CD4-positive, alpha-beta T cell (primary cell): ENCODE measurements at regions of chr12 and their contacts with region 1.

Region 1: GRCh38 chr12:53321074-53321814 is at the start of gene AAAS:
- DNase-seq: peak; percentile 86 to 97 (median 94)
- ATAC-seq: peak; percentile 79
- H3K4me3 ChIP-seq: peak within 1 kb of the TSS; percentile 69
- H3K4me3 Mint-ChIP-seq: peak within 1 kb of the TSS; percentile 94
- H3K27ac ChIP-seq: peak within 1 kb of the TSS; percentile 61 to 77
- H3K27ac Mint-ChIP-seq: peak within 1 kb of the TSS; percentile 87
- H3K4me1 ChIP-seq: peaks cover 52% of the 10 kb centered on the region
- H3K4me1 Mint-ChIP-seq: peaks cover 44% of the 10 kb centered on the region
- H3K27me3 ChIP-seq: no peaks in the 10 kb centered on the region
- H3K27me3 Mint-ChIP-seq: no peaks in the 10 kb centered on the region
- CTCF ChIP-seq: peak; percentile 100
- total RNA-seq, gene AAAS: 21.0 to 22.7 TPM

Region 2: DNA sequence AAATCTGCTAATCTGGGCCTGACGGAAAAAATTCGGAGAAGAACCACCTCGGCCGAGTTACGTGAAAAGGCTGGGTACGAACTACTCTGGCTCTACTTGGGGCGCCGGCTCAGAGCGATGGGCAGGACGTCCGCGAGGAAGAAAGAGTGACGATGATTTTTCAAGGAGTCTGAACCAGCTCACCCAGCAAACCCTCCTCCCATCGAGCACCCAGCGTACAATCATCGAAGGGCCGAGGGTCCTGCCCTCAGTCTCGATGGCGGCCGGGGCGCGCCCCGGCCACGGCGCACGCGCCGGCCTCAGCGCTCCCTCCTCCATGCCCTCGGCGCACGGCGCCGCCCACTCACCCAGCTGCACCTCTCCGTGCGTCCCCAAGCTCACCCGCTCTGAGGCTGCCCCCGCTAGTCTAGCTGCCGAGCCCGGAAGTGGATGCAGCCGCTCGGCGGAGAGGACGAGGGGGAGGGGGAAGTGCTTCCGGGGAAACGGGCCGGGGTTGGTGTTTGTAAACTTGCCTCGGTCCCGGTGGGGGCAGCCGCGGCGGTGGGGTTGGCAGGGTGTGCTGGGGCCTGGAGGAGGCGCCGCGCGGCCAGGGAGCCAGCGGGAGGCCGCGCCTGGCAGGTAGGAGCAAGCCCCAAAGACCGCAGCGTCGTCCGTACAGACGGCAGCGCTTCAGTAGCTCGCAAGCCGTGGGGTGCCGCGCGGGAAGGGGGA is 140.9 kb before region 1 on chr12 and contains the starts of genes CSAD and ZNF740:
- CTCF ChIA-PET with region 1: interaction called, 7 read pairs
- POLR2A ChIA-PET with region 1: interaction called, 18 read pairs
- intact Hi-C with region 1: no loop called
- DNase-seq: peak; percentile 92 to 99 (median 97)
- ATAC-seq: peak; percentile 93
- H3K4me3 ChIP-seq: peak within 1 kb of the TSS; percentile 94
- H3K4me3 Mint-ChIP-seq: peak within 1 kb of the TSS; percentile 98
- H3K27ac ChIP-seq: peak within 1 kb of the TSS; percentile 87 to 92
- H3K27ac Mint-ChIP-seq: peak within 1 kb of the TSS; percentile 94
- H3K4me1 ChIP-seq: peaks cover 52% of the 10 kb centered on the region
- H3K4me1 Mint-ChIP-seq: peaks cover 57% of the 10 kb centered on the region
- H3K27me3 ChIP-seq: no peaks in the 10 kb centered on the region
- H3K27me3 Mint-ChIP-seq: no peaks in the 10 kb centered on the region
- CTCF ChIP-seq: no peak
- total RNA-seq, gene CSAD: 56.7 to 57.3 TPM
- total RNA-seq, gene ZNF740: 24.4 to 24.7 TPM

Region 3: DNA sequence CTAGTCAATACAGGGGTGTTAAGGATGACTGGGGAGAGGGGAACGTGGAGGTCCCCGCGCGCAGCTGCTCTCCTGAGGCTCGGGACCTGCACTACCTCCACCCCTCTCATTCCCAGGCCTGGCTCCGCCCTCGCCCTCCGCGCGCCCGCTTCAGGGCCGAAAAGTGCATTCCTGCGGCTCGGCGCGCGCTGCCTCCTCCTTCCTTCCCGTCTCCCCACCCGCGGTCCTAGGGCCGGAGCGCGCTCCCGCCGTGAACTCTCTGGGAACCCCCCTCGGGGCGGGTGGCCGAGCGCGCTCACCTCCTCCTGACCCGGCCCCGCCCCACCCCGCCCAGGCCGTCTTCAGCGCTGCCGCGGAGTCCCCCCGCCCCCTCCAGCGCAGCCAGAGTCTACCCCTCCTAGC is 100.4 kb before region 1 on chr12:
- CTCF ChIA-PET with region 1: interaction called, 5 read pairs
- POLR2A ChIA-PET with region 1: interaction called, 21 read pairs
- intact Hi-C with region 1: no loop called
- DNase-seq: peak; percentile 51 to 94 (median 70)
- ATAC-seq: peak; percentile 47
- H3K4me3 ChIP-seq: peak overlapping the region; percentile 77
- H3K4me3 Mint-ChIP-seq: peak overlapping the region; percentile 100
- H3K27ac ChIP-seq: peak overlapping the region; percentile 92 to 96
- H3K27ac Mint-ChIP-seq: peak overlapping the region; percentile 90
- H3K4me1 ChIP-seq: peaks cover 84% of the 10 kb centered on the region
- H3K4me1 Mint-ChIP-seq: peaks cover 86% of the 10 kb centered on the region
- H3K27me3 ChIP-seq: no peaks in the 10 kb centered on the region
- H3K27me3 Mint-ChIP-seq: no peaks in the 10 kb centered on the region
- CTCF ChIP-seq: no peak

Region 4: GRCh38 chr12:53344824-53345485 is 23.7 kb after region 1 on chr12:
- CTCF ChIA-PET with region 1: interaction called, 51 read pairs
- POLR2A ChIA-PET with region 1: interaction called, 87 read pairs
- intact Hi-C with region 1: loop called (anchors 1 kb)
- DNase-seq: peak; percentile 51 to 85 (median 65)
- ATAC-seq: peak; percentile 80
- H3K4me3 ChIP-seq: peak overlapping the region; percentile 66
- H3K4me3 Mint-ChIP-seq: peak overlapping the region; percentile 93
- H3K27ac ChIP-seq: no peak overlapping the region
- H3K27ac Mint-ChIP-seq: peak overlapping the region; percentile 72
- H3K4me1 ChIP-seq: peaks cover 15% of the 10 kb centered on the region
- H3K4me1 Mint-ChIP-seq: peaks cover 21% of the 10 kb centered on the region
- H3K27me3 ChIP-seq: peaks cover 2 to 3% of the 10 kb centered on the region in 2 experiments
- H3K27me3 Mint-ChIP-seq: peaks cover 3% of the 10 kb centered on the region
- CTCF ChIP-seq: peak; percentile 81

Region 5: DNA sequence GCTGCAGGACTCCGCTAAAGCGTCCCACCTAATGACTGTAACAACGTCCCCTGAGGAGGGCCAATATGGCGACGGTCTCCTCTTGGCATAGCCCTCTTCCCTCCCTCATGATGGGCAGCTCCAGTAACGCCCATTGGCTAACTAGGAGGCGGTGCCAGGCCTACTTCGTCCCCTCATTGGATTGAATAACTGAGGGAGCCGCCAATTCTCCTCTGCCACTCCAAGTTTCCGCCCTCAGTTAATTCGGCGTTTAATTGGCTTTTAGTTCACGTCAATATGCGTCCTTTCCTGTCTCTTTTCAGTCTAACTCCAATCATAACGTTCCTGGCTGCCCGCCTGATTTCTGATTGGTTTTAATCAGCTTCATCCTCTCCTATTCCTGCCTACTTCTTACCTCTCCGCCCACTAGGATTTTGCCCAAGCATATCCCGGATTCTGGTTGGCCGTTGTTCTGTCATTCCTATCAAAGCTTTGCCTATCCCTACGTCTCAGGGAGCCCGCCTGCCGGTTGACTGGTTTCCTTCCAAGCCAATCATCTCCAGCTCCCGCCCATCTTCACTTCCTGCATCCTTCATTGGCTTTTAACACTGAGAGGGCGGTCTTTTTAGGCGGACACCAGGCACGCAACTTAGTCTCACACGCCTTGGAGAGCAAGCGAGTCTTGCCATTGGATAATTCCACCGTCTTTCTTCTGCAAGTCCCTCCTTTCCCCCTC is 58.3 kb after region 1 on chr12:
- CTCF ChIA-PET with region 1: interaction called, 10 read pairs
- POLR2A ChIA-PET with region 1: interaction called, 32 read pairs
- intact Hi-C with region 1: loop called (anchors 1 kb)
- DNase-seq: peak in 12 of 14 experiments; percentile 80 to 100 (median 92)
- ATAC-seq: peak; percentile 76
- H3K4me3 ChIP-seq: peak overlapping the region; percentile 63
- H3K4me3 Mint-ChIP-seq: no peak overlapping the region
- H3K27ac ChIP-seq: peak overlapping the region; percentile 67 to 75
- H3K27ac Mint-ChIP-seq: no peak overlapping the region
- H3K4me1 ChIP-seq: peaks cover 52% of the 10 kb centered on the region
- H3K4me1 Mint-ChIP-seq: peaks cover 31% of the 10 kb centered on the region
- H3K27me3 ChIP-seq: no peaks in the 10 kb centered on the region
- H3K27me3 Mint-ChIP-seq: no peaks in the 10 kb centered on the region
- CTCF ChIP-seq: no peak

Region 6: DNA sequence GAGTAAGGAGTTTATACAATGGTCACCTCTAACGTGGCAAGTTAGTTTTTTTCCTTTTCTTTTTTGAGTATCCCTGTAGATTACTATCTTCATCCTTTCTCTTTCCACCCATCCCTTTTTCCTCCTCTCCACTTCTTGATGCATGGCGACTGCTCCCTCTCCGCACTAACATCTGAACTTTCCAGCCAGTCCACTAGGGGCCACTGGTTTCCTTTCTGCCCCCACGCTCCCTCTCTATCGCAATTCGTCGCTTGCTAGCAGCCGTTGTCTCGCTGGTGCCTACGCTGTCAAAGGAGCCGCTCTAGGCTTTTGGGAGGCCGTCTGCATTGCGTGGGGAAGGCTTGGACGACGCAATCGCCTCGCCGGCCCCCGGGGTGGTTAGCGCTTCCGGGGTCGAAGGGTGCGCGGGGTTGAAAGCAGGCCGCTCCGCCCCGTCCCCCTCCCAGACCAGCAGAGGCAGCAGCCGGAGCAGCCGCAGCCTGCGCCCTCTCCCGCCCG is 130.5 kb after region 1 on chr12 and contains the start of gene PCBP2:
- CTCF ChIA-PET with region 1: interaction called, 3 read pairs
- POLR2A ChIA-PET with region 1: interaction called, 4 read pairs
- intact Hi-C with region 1: loop called in 1 of 2 experiments (anchors 1 kb)
- DNase-seq: peak; percentile 93 to 99 (median 97)
- ATAC-seq: peak; percentile 93
- H3K4me3 ChIP-seq: peak within 1 kb of the TSS; percentile 86
- H3K4me3 Mint-ChIP-seq: peak within 1 kb of the TSS; percentile 98
- H3K27ac ChIP-seq: peak within 1 kb of the TSS; percentile 93
- H3K27ac Mint-ChIP-seq: peak within 1 kb of the TSS; percentile 89
- H3K4me1 ChIP-seq: peaks cover 16% of the 10 kb centered on the region
- H3K4me1 Mint-ChIP-seq: peaks cover 46% of the 10 kb centered on the region
- H3K27me3 ChIP-seq: no peaks in the 10 kb centered on the region
- H3K27me3 Mint-ChIP-seq: no peaks in the 10 kb centered on the region
- CTCF ChIP-seq: peak; percentile 87
- total RNA-seq, gene PCBP2: 1,331 to 1,359 TPM

Region 7: DNA sequence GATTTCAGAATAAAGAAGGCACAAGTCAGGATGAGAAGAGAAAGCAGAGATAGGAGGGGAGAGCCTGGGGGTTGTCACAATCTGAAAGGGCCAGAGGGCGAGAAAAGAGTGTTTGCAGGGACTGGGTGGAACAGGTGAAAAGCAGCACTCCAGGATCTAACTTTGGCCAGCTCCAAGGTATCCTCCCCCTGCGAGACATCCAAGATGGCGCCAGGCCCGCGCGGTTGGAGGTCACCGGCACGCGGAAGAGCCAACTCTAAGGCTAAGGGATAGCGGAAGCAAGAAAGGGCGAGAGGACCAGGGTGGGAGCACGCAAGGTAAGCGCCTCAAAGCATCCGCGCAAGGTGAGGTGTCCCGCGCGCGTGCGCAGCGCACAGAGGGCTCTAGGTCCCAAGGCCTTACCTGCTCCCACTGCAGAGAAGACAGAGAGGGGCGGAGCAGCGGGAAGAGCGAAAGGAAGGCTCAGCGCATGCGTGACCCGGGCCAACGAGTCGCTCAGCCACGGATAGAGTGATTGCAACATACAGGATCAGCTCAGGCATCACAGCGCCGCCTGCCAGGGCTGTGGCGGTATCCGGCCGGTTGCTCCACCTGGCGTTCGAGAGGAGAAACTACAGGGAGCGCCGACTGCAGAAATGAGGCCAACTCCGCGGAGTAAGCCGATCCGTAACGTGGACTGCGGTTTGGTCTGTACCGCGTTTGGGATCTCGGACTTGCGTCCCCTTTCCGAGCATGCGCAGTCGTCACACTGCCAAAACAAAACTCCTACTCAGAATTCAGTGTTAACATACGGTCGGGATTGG is 354.6 kb after region 1 on chr12 and contains the start of gene ATP5MC2:
- CTCF ChIA-PET with region 1: no interaction called
- POLR2A ChIA-PET with region 1: no interaction called
- intact Hi-C with region 1: loop called in 1 of 2 experiments (anchors 10 kb)
- DNase-seq: peak; percentile 95 to 100 (median 96)
- ATAC-seq: peak; percentile 92
- H3K4me3 ChIP-seq: peak within 1 kb of the TSS; percentile 78
- H3K4me3 Mint-ChIP-seq: peak within 1 kb of the TSS; percentile 93
- H3K27ac ChIP-seq: peak within 1 kb of the TSS; percentile 58 to 66
- H3K27ac Mint-ChIP-seq: peak within 1 kb of the TSS; percentile 90
- H3K4me1 ChIP-seq: peaks cover 31% of the 10 kb centered on the region
- H3K4me1 Mint-ChIP-seq: peaks cover 32% of the 10 kb centered on the region
- H3K27me3 ChIP-seq: peaks cover 10 to 18% of the 10 kb centered on the region in 2 experiments
- H3K27me3 Mint-ChIP-seq: peaks cover 17% of the 10 kb centered on the region
- CTCF ChIP-seq: peak; percentile 99
- total RNA-seq, gene ATP5MC2: 235 to 245 TPM